ENCODE measurements at regions of chr1 and their contacts with region 1.

Region 1: DNA sequence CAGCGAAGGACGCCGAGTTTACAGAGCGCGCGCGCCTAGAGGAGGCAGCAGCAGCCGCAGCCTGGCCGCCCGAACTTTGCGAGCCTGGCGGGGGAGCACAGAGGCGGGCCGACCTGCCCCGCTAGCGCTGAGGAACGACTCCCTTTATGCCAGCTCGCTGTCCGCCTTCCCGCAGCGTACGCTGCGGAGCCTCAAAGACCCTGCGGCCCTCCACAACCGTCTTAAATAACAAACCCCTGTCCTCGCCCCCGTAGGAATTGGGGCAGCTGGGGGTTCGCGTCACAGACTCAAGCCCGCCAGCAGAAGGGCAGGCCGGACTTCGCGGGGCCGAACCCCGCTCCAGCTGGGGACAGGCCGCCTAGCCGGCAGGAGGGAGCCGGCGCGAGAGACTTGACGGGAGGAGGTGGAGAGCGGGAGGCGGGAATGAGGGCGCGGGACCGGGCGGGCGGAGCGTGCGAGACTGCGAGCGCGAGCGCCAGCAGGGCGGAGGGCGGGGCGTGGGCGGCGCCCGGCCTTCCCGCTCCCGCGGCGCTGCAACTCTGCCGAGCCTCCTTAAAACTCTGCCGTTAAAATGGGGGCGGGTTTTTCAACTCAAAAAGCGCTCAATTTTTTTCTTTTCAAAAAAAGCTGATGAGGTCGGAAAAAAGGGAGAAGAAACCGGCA is 1.8 kb upstream of the CDKN2C start:
- DNase-seq: peak; percentile 89
- ATAC-seq: peak; percentile 81
- H3K4me3 ChIP-seq: peak overlapping the region; percentile 73 to 98 (median 87)
- H3K4me3 Mint-ChIP-seq: peak overlapping the region; percentile 97
- H3K27ac ChIP-seq: peak overlapping the region; percentile 77 to 83
- H3K27ac Mint-ChIP-seq: peak overlapping the region; percentile 93
- H3K4me1 ChIP-seq: peaks cover 20 to 26% of the 10 kb centered on the region in 2 donors
- H3K4me1 Mint-ChIP-seq: peaks cover 24% of the 10 kb centered on the region
- H3K27me3 ChIP-seq: peaks cover 0 to 27% (median 11%) of the 10 kb centered on the region in 4 experiments
- H3K27me3 Mint-ChIP-seq: peaks cover 13% of the 10 kb centered on the region
- CTCF ChIP-seq: peak; percentile 62

Region 2: DNA sequence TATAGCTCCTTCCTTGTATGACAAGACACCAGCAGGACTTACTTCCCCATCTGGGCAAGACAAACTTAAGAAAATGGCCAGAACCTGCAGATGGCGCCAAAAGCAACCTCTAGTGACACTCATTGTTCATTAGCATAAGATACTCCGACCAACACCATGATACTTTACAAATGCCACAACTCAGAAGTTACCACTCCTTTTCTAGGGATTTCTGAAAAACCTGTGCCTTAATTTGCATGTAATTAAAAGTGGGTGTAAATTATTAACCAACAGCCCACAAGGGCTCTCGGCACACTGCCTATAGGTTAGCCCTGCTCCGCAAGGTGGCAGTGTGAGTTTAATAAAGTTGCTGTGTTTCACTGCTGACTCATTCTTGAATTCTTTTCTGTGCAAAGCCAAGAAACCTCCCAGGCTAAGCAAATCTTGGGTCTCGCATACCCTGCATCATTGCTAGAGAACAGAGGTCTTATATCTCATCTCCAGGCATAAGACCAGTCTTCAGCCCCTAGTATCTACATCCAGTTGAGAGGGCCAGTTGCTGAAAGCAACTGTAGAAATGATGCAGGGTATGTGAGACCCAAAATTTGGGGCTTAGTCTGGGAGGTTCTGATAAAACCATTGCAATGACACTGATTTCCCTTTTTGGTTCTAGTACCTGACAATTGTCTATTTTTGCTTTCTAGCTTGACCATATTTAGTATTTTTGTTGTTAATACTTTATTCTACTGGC is 94.7 kb before region 1 on chr1:
- CTCF ChIA-PET with region 1: interaction called, 18 read pairs
- POLR2A ChIA-PET with region 1: no interaction called
- intact Hi-C with region 1: loop called (anchors 5 kb)
- DNase-seq: peak; percentile 86
- ATAC-seq: peak; percentile 88
- H3K4me3 ChIP-seq: peak overlapping the region in 2 of 5 experiments; percentile 30 to 41
- H3K4me3 Mint-ChIP-seq: peak overlapping the region; percentile 81
- H3K27ac ChIP-seq: no peak overlapping the region
- H3K27ac Mint-ChIP-seq: peak overlapping the region; percentile 68
- H3K4me1 ChIP-seq: peaks cover 0 to 3% of the 10 kb centered on the region in 2 donors
- H3K4me1 Mint-ChIP-seq: peaks cover 11% of the 10 kb centered on the region
- H3K27me3 ChIP-seq: no peaks in the 10 kb centered on the region
- H3K27me3 Mint-ChIP-seq: no peaks in the 10 kb centered on the region
- CTCF ChIP-seq: peak; percentile 91

Region 3: GRCh38 chr1:50978144-50978851 is 10.0 kb after region 1 on chr1:
- CTCF ChIA-PET with region 1: interaction called, 16 read pairs
- POLR2A ChIA-PET with region 1: interaction called, 5 read pairs
- intact Hi-C with region 1: loop called (anchors 1 kb)
- DNase-seq: peak; percentile 67
- ATAC-seq: peak; percentile 54
- H3K4me3 ChIP-seq: peak overlapping the region; percentile 21 to 76 (median 62)
- H3K4me3 Mint-ChIP-seq: peak overlapping the region; percentile 85
- H3K27ac ChIP-seq: no peak overlapping the region
- H3K27ac Mint-ChIP-seq: peak overlapping the region; percentile 26
- H3K4me1 ChIP-seq: peaks cover 25 to 31% of the 10 kb centered on the region in 2 donors
- H3K4me1 Mint-ChIP-seq: peaks cover 20% of the 10 kb centered on the region
- H3K27me3 ChIP-seq: peaks cover 0 to 44% (median 36%) of the 10 kb centered on the region in 4 experiments
- H3K27me3 Mint-ChIP-seq: peaks cover 27% of the 10 kb centered on the region
- CTCF ChIP-seq: no peak

Region 4: DNA sequence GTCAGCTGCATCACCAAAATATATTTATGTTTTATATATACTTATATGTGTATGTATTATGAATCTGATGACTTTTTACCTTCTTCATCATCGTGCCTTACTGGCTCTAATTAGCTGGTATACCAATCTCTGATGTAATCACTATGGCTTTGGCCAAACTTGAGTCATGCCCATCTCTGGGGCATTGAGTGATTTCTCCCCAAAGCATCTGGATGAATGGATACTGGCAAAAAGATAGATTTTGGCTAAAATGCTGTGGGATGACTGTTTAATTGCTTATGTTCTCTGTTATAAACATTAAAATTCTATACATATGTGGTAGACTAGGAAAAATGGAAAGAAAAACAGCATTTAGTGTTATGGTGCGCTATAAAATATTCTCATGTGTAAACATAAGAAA is 21.4 kb after region 1 on chr1:
- CTCF ChIA-PET with region 1: no interaction called
- POLR2A ChIA-PET with region 1: no interaction called
- intact Hi-C with region 1: no loop called
- DNase-seq: no peak
- ATAC-seq: no peak
- H3K4me3 ChIP-seq: no peak overlapping the region
- H3K4me3 Mint-ChIP-seq: no peak overlapping the region
- H3K27ac ChIP-seq: no peak overlapping the region
- H3K27ac Mint-ChIP-seq: no peak overlapping the region
- H3K4me1 ChIP-seq: no peaks in the 10 kb centered on the region
- H3K4me1 Mint-ChIP-seq: no peaks in the 10 kb centered on the region
- H3K27me3 ChIP-seq: no peaks in the 10 kb centered on the region
- H3K27me3 Mint-ChIP-seq: no peaks in the 10 kb centered on the region
- CTCF ChIP-seq: no peak

Region 5: DNA sequence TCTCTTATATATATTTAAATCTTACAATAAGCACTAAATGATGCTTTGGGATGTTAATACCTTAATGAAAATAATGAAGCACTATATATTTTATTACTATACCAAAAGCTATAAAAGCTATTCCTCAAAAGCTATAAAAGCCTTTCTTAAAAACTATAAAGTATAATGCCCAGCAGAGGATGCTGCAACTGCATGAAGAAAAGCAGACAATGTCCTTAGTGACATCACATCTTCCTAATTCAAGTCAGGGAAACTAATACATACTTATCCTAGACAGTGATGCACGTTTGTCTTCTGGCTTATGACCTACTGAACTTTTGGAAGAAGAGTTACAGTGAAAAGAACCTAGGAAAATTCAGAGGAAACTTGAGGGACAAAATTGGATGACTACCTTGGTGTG is 120.2 kb after region 1 on chr1:
- CTCF ChIA-PET with region 1: no interaction called
- POLR2A ChIA-PET with region 1: no interaction called
- intact Hi-C with region 1: no loop called
- DNase-seq: no peak
- ATAC-seq: no peak
- H3K4me3 ChIP-seq: no peak overlapping the region
- H3K4me3 Mint-ChIP-seq: no peak overlapping the region
- H3K27ac ChIP-seq: no peak overlapping the region
- H3K27ac Mint-ChIP-seq: no peak overlapping the region
- H3K4me1 ChIP-seq: peaks cover 0 to 2% of the 10 kb centered on the region in 2 donors
- H3K4me1 Mint-ChIP-seq: no peaks in the 10 kb centered on the region
- H3K27me3 ChIP-seq: peaks cover 0 to 23% (median 15%) of the 10 kb centered on the region in 4 experiments
- H3K27me3 Mint-ChIP-seq: peaks cover 43% of the 10 kb centered on the region
- CTCF ChIP-seq: no peak

Region 6: GRCh38 chr1:51235673-51236530 is 267.6 kb after region 1 on chr1 and contains the start of gene RNF11:
- CTCF ChIA-PET with region 1: no interaction called
- POLR2A ChIA-PET with region 1: no interaction called
- intact Hi-C with region 1: loop called (anchors 5 kb)
- DNase-seq: peak; percentile 95
- ATAC-seq: peak; percentile 73
- H3K4me3 ChIP-seq: peak within 1 kb of the TSS; percentile 69 to 96 (median 86)
- H3K4me3 Mint-ChIP-seq: peak within 1 kb of the TSS; percentile 94
- H3K27ac ChIP-seq: peak within 1 kb of the TSS; percentile 58 to 80
- H3K27ac Mint-ChIP-seq: peak within 1 kb of the TSS; percentile 94
- H3K4me1 ChIP-seq: peaks cover 29 to 39% of the 10 kb centered on the region in 2 donors
- H3K4me1 Mint-ChIP-seq: peaks cover 34% of the 10 kb centered on the region
- H3K27me3 ChIP-seq: peaks cover 0 to 6% (median 1%) of the 10 kb centered on the region in 4 experiments
- H3K27me3 Mint-ChIP-seq: peaks cover 8% of the 10 kb centered on the region
- CTCF ChIP-seq: no peak
- total RNA-seq, gene RNF11: 17.6 and 20.6 TPM in 2 replicates